GM13976 (cell line): ENCODE measurements at regions of chr13 and their contacts with region 1.

Region 1: DNA sequence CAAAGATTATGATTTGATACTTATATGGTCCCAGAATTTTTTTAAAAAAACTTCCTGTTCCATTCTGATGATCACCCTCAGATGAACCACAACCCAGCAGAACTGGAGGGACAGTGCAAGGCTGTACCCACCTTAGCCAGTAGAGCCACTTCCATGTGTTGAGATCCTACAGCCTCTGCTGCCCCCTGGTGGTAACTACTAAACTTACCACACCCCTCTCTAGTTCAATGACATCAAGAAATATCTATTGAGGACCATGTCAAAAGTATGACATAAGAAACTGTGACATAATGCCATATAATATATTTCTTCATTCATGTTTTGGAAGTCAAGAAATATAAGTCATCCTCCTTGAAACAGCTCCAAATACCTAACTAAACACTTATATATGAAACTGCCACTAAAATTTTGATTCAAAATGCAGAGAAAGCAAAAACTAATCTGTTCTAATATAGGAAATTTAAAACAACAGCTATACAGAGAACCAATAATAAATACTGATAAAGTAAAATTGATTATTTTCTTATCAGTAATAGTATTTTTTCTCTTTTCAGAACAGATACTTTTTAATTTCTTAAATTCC is 412.6 kb downstream of the KCTD12 start:
- DNase-seq: peak; percentile 25
- CTCF ChIP-seq: peak; percentile 62

Region 2: GRCh38 chr13:75687150-75687763 is 786.4 kb before region 1 on chr13:
- in situ Hi-C with region 1: loop called (anchors 25 kb)
- DNase-seq: no peak
- CTCF ChIP-seq: peak; percentile 11

Region 3: GRCh38 chr13:75876360-75877050 is 597.1 kb before region 1 on chr13:
- in situ Hi-C with region 1: loop called (anchors 5 kb)
- DNase-seq: peak; percentile 54
- CTCF ChIP-seq: peak; percentile 87

Region 4: GRCh38 chr13:76286178-76286577 is 187.5 kb before region 1 on chr13:
- in situ Hi-C with region 1: no loop called
- DNase-seq: no peak
- CTCF ChIP-seq: no peak

Region 5: GRCh38 chr13:76533251-76533650 is 59.6 kb after region 1 on chr13:
- in situ Hi-C with region 1: no loop called
- DNase-seq: no peak
- CTCF ChIP-seq: no peak

Region 6: GRCh38 chr13:76745261-76746200 is 271.9 kb after region 1 on chr13:
- in situ Hi-C with region 1: no loop called
- DNase-seq: peak; percentile 35
- CTCF ChIP-seq: no peak

Region 7: GRCh38 chr13:77697217-77698103 is 1223.8 kb after region 1 on chr13 and contains the start of gene SLAIN1:
- in situ Hi-C with region 1: no loop called
- DNase-seq: peak; percentile 96
- CTCF ChIP-seq: no peak